ENCODE measurements at regions of chr9 and their contacts with region 1.

Region 1: DNA sequence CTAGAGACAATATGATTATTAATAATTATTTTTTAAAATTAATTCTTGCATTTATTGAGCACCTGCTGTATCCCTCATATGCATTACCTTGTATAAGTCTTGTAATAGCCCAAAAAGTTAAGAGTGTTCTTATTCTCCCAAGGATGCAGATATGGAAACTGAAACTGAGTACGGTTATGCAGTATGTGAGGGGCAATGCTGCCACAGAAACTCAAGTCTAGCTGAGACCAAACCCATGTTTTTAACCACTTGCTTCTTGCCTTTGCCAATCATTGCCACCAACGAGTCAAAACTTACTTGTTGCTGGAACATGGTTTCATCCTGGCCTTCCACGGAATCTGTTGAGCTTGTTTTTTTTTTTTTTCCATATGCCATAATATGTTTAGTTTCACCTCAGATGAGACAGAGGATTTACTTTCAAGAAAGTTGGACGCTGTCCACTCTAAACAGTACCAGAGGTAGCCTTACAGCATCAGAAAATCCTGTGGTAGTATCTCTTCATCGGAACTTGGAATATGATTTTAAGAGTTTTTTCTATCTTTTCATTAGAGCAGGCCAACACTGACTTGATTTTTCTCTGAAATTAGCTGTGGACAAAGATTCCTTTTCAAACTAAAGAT is 27.9 kb downstream of the DOCK8 start:
- DNase-seq: no peak
- ATAC-seq: peak; percentile 69
- H3K4me3 Mint-ChIP-seq: peak overlapping the region; percentile 71
- H3K27ac Mint-ChIP-seq: peak overlapping the region; percentile 75
- H3K4me1 Mint-ChIP-seq: peaks cover 52% of the 10 kb centered on the region
- H3K27me3 Mint-ChIP-seq: no peaks in the 10 kb centered on the region

Region 2: DNA sequence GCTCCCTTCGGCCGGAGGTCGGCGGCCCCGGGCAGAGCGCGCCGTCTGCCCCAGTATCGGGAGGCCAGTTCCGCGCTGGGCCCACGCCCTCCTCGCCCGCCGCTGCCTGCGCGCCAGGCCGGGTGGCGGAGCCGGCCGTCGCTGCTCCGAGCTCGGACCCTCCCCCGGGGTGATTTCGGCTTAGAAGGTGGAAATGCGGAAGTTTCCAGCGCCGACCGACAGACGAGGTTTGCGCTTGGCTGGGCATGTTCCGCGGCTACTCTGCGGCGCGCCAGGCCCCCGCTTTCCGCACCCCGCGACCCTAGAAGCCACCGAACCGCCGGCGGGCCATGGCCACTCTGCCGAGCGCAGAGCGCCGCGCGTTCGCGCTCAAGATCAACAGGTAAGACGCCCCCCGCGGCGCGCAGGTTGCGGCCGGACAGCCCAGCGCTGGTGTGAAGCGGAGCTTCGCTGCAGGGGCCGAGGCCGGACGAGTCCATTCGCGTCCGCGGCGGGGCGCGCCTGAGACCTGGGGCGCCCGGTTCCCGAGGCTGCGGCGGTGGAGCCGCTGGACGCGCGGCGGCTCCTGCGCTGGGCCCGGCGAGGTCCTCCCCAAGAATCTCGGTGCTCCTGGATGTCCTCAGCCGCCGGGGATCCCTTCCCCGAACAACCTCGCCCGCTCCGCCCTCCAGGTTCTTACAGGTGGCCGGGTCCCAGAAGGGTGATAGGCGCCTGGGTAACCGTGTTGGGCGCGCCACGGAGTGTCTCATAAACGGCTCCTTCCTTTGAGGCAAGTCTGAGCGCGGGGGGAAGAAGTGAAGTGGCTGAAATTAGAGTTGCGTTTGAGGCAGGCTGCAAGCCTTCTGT is 27.7 kb before region 1 on chr9 and contains the start of gene DOCK8:
- POLR2A ChIA-PET with region 1: interaction called, 31 read pairs
- DNase-seq: peak; percentile 85
- ATAC-seq: peak; percentile 82
- H3K4me3 Mint-ChIP-seq: peak within 1 kb of the TSS; percentile 87
- H3K27ac Mint-ChIP-seq: peak within 1 kb of the TSS; percentile 88
- H3K4me1 Mint-ChIP-seq: peaks cover 22% of the 10 kb centered on the region
- H3K27me3 Mint-ChIP-seq: no peaks in the 10 kb centered on the region
- total RNA-seq, gene DOCK8: 318 to 319 TPM

Region 3: DNA sequence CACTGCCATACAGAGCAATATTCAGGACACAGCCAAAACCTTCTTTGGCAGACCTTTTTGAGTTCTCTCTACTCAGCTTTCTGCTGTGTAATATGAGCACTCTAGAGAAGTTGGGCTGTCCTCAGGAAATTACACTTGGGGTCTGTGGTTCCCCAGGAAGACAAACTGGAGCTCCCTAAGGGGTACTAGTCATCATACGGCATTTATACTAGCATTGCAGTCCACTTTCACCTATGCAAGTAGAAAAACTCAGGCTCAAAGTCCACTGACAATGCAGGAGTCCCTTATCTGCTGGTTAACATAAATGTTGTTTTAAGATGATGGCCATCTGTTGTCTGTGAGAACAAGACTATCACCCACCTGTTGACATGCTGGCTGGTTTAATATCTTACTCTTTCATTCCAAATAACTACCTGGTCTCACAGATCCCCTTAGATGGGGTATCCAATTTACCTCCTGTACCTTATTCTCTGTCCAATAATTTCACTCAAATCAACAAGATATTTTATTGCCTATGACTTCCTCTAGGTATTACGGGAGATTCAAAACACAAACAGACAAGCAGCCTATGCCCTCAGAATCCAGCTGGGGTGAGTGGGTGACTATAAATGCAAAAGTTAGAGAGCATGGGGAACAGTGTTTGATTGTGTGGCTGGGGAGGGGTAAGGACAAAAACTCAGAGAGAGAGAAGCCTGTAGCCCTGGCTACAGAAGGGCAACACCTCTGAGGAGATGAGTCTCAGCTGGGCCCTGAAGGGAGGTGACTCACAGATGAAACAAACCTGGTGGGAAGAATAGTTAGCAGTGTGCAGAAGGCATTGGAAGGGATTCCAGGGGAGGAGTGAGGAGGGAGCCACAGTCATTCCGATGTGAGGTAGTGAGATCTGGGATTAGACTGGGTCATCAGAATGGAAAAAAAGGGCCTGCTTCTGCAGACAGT is 17.7 kb before region 1 on chr9:
- POLR2A ChIA-PET with region 1: interaction called, 26 read pairs
- DNase-seq: no peak
- ATAC-seq: peak; percentile 51
- H3K4me3 Mint-ChIP-seq: no peak overlapping the region
- H3K27ac Mint-ChIP-seq: peak overlapping the region; percentile 62
- H3K4me1 Mint-ChIP-seq: peaks cover 28% of the 10 kb centered on the region
- H3K27me3 Mint-ChIP-seq: no peaks in the 10 kb centered on the region

Region 4: DNA sequence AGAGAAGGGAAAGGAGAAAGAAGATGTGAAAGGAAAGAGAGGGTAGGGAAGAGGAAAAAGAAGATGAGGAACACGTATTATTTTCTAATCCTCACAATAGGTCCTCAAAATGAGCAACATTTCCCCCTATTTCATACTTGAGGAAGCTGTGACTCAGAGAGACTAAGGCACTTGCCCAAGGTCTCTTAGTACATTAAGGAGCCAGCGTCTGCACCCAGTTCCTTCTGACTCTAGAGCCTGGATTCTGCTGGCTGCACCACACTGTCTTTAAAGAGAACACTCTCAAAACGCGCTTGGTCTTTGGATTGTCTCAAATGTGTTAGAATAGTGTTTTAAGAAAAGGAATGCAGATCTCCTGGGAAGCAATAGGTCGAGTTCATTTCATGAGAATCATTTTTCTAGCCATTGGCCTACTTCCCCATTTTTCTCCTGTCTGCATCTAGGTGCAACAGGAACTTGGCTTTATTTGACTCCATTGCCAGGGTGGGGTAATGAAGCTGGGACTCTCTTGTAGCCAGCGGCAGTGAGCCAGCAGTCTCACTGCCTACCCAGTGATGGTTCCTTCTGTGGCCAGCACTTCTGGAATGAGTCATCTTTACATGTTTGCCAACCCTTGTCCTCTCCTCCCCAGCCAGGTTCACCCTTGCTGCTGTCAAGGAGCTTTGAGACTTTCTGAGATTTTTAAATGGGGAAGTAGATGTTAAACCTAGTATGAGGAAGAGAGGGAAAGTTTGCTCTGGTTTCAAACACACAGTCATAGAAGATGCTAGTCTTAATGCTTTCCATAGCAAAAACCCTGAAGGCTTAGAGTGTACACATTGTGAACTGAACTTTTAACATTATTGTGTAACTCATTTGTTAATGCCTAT is 54.8 kb after region 1 on chr9:
- POLR2A ChIA-PET with region 1: no interaction called
- DNase-seq: no peak
- ATAC-seq: peak; percentile 81
- H3K4me3 Mint-ChIP-seq: peak overlapping the region; percentile 33
- H3K27ac Mint-ChIP-seq: peak overlapping the region; percentile 77
- H3K4me1 Mint-ChIP-seq: peaks cover 41% of the 10 kb centered on the region
- H3K27me3 Mint-ChIP-seq: no peaks in the 10 kb centered on the region

Measured in activated naive CD8-positive, alpha-beta T cell treated with anti-CD3 and anti-CD28 coated beads, Interleukin-2, amount 10 ng/mL, durations not matched to agents 7 days and 5 days (primary cell).